ENCODE measurements at regions of chr6 and their contacts with region 1.

Region 1: GRCh38 chr6:4313044-4313686 is 177.8 kb upstream of the ECI2 start:
- DNase-seq: peak; percentile 95
- H3K4me3 ChIP-seq: peak overlapping the region in 1 of 3 experiments; percentile 18
- H3K27ac ChIP-seq: peak overlapping the region; percentile 96
- H3K4me1 ChIP-seq: peaks cover 18% of the 10 kb centered on the region
- H3K27me3 ChIP-seq: no peaks in the 10 kb centered on the region
- CTCF ChIP-seq: peak; percentile 60 to 71

Region 2: GRCh38 chr6:4351520-4352315 is 38.6 kb after region 1 on chr6:
- CTCF ChIA-PET with region 1: no interaction called
- dilution Hi-C with region 1: loop called (anchors 5 kb)
- in situ Hi-C with region 1: no loop called
- intact Hi-C with region 1: no loop called
- DNase-seq: peak; percentile 80
- H3K4me3 ChIP-seq: peak overlapping the region in 2 of 3 experiments; percentile 6 to 35
- H3K27ac ChIP-seq: peak overlapping the region; percentile 59
- H3K4me1 ChIP-seq: peaks cover 42% of the 10 kb centered on the region
- H3K27me3 ChIP-seq: no peaks in the 10 kb centered on the region
- CTCF ChIP-seq: no peak

Region 3: GRCh38 chr6:4606821-4607704 is 293.9 kb after region 1 on chr6:
- CTCF ChIA-PET with region 1: no interaction called
- dilution Hi-C with region 1: no loop called
- in situ Hi-C with region 1: no loop called
- intact Hi-C with region 1: loop called (anchors 2 kb)
- DNase-seq: peak; percentile 82
- H3K4me3 ChIP-seq: peak overlapping the region in 2 of 3 experiments; percentile 19 to 20
- H3K27ac ChIP-seq: peak overlapping the region; percentile 68
- H3K4me1 ChIP-seq: peaks cover 45% of the 10 kb centered on the region
- H3K27me3 ChIP-seq: no peaks in the 10 kb centered on the region
- CTCF ChIP-seq: no peak

Region 4: DNA sequence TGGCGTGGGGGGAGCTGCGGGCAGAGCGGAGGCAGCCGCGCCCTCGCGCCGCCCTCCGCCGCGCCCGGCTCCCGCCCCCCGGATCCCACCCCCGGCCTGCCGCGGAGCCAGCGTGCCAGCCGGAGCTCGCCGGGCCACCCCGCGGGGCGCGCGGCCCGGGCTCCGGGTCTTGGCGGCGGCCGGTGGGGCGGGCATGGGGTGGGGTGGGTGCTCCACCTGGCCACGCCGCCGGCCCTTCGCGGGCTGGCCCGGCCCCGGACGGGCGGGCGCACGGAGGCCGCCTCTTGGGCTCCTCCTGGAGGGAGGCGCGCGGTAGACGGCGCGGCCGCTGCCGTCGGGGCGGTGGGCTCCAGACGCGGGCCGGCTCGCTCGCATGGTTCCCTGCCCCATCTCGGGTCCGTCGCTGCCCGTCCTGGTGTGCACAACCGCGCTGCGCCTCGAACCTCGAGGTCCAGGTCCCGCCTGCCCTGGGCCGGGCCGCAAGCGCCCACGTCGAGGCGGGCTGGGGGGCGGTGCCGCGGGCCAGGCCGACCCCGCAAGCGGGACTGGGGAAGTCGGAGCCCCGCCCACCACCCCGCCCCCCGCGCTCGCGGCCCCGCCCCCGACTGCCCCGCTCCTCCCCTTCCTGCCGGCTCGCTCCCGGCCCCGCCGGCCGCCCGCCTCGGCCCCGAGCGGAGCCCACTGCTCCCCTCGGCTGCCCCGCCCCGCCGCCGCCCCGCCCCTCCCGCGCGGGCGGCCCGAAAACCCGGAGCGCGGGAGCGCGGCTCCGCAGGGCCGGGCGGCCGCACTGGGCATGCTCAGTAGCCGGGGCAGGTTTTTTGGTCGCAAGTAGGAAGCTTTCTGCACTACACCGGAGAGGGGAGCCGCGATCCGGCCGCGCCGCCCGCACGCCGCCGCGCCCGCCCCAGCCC is 462.7 kb after region 1 on chr6 and contains the start of gene CDYL:
- CTCF ChIA-PET with region 1: no interaction called
- dilution Hi-C with region 1: no loop called
- in situ Hi-C with region 1: no loop called
- intact Hi-C with region 1: loop called (anchors 1 kb)
- DNase-seq: peak; percentile 84
- H3K4me3 ChIP-seq: peak within 1 kb of the TSS; percentile 66 to 75 (median 69)
- H3K27ac ChIP-seq: peak within 1 kb of the TSS; percentile 67
- H3K4me1 ChIP-seq: peaks cover 11% of the 10 kb centered on the region
- H3K27me3 ChIP-seq: no peaks in the 10 kb centered on the region
- CTCF ChIP-seq: peak in 1 of 2 donors; percentile 44
- total RNA-seq, gene CDYL: 47.7 to 49.7 TPM

Region 5: DNA sequence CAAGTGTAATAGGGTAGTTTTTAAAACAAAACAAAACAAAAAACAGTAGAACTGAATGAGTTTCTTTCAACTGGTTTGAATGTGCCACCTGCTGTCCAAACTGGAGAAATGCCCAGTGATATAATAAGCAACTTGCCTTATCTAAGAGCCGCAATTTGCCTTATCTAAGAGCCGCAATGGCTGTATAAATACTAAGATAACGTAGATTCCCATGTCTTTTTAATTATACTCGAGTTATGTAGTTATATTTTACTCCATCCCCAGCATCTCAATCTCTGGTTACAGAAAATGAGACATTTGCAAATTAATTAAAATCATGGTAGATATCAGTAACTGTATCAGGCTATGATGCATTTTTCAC is 623.5 kb after region 1 on chr6:
- CTCF ChIA-PET with region 1: no interaction called
- dilution Hi-C with region 1: no loop called
- in situ Hi-C with region 1: loop called (anchors 10 kb)
- intact Hi-C with region 1: loop called (anchors 1 kb)
- DNase-seq: no peak
- H3K4me3 ChIP-seq: no peak overlapping the region
- H3K27ac ChIP-seq: no peak overlapping the region
- H3K4me1 ChIP-seq: peaks cover 19% of the 10 kb centered on the region
- H3K27me3 ChIP-seq: no peaks in the 10 kb centered on the region
- CTCF ChIP-seq: peak; percentile 48 to 57

Region 6: DNA sequence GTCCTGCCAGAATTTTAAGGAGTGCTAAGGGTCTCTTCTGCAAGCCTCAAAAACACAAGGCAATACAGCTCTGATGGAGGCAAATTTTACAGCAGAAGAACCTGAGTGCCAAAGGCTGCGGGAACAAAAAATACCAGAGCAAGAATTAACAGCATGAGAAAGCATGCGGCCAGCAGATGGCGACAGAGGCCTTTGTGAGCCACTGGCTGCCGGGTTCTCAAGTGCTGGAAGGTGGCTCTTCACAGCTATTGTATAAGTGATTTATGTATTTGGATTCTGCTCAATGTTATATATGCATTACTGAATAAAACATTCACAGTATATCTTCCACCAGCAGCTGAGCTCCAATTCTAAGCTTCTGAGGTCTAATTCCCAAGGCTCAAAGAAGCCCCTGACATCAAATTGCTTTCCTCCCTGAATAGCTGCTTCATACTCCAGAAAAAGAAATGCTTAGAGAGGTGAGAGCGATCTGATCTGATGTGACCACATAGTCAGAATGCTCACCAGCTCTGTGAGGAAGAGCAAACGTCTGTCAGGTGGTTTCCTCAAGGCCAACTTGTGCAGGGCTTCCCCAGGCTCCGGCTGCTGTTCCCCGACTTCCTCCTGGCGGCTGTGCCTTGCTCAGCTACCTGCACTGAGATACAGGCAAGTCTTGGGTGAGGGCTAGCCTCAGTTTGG is 830.6 kb after region 1 on chr6:
- CTCF ChIA-PET with region 1: no interaction called
- dilution Hi-C with region 1: no loop called
- in situ Hi-C with region 1: no loop called
- intact Hi-C with region 1: loop called (anchors 5 kb)
- DNase-seq: peak; percentile 55
- H3K4me3 ChIP-seq: no peak overlapping the region
- H3K27ac ChIP-seq: no peak overlapping the region
- H3K4me1 ChIP-seq: no peaks in the 10 kb centered on the region
- H3K27me3 ChIP-seq: no peaks in the 10 kb centered on the region
- CTCF ChIP-seq: peak; percentile 91

Region 7: DNA sequence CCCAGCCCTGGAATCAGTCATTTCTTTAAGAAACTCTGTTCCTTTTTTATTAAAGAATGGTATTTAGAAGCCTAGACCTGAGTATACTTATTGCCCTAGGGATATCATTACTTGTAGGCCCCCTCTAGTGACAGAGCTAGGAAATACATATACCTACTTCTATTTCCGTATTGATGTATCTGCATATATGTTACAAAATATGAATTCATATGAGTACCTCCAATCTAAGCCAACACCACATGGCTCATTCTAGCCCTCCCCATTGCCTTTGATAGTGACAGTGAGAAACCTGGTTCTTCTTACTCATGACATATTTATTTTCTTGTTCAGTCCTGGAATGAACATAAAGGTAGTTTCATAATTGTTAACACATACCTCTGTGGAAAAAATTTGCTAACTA is 1085.4 kb after region 1 on chr6:
- CTCF ChIA-PET with region 1: no interaction called
- dilution Hi-C with region 1: no loop called
- in situ Hi-C with region 1: loop called in 1 of 2 experiments (anchors 25 kb)
- intact Hi-C with region 1: loop called (anchors 1 kb)
- DNase-seq: peak; percentile 56
- H3K4me3 ChIP-seq: no peak overlapping the region
- H3K27ac ChIP-seq: no peak overlapping the region
- H3K4me1 ChIP-seq: peaks cover 11% of the 10 kb centered on the region
- H3K27me3 ChIP-seq: no peaks in the 10 kb centered on the region
- CTCF ChIP-seq: peak; percentile 60 to 65

Measured in mammary epithelial cell (primary cell).